OCI-LY7 (cell line): ENCODE measurements at regions of chr4 and their contacts with region 1.

Region 1: GRCh38 chr4:151614561-151614960 is 146.2 kb downstream of the GATB start:
- DNase-seq: no peak
- H3K4me3 ChIP-seq: no peak overlapping the region
- H3K27ac ChIP-seq: no peak overlapping the region
- H3K4me1 ChIP-seq: no peaks in the 10 kb centered on the region
- CTCF ChIP-seq: no peak

Region 2: GRCh38 chr4:151117371-151117962 is 497.1 kb before region 1 on chr4:
- CTCF ChIA-PET with region 1: no interaction called
- POLR2A ChIA-PET with region 1: no interaction called
- intact Hi-C with region 1: loop called (anchors 5 kb)
- DNase-seq: peak; percentile 71
- H3K4me3 ChIP-seq: no peak overlapping the region
- H3K27ac ChIP-seq: no peak overlapping the region
- H3K4me1 ChIP-seq: peaks cover 5% of the 10 kb centered on the region
- CTCF ChIP-seq: peak; percentile 87

Region 3: DNA sequence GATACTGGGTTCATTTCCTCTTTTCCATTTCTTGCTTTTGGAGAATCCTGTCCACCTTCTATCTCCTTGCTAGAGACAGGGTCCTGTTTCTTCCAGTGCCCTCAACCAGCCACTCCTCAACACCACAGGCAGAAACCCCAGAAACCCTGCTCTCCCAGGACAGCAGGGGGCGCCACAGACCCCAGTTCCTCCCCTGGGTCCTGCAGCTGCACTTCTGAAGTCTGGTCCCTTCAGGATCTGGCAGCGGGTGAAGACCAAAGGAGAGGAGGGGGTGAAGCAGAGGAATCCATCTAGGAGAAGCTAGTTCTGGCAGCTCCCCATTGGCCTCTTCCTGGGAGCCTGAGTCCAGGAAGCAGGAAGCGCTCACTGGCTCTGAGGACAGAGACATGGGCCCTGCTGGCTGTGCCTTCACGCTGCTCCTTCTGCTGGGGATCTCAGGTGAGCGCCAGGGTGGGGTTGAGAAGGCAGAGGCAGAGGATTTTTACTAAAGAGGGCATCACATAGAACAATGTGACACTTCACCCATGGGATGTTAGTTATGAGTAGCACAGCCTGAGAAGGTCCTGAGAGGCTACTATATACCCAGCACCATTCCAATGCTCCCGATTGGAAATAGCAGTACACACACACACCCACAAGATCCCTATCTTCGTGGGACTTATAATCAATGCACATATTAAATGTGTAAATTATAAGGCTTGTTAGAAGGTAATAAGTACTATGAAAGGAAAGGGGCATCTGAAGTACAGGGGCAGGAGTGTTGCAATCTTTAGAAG is 337.6 kb before region 1 on chr4 and contains the start of gene PRSS48:
- CTCF ChIA-PET with region 1: no interaction called
- POLR2A ChIA-PET with region 1: no interaction called
- intact Hi-C with region 1: loop called (anchors 5 kb)
- DNase-seq: peak; percentile 48
- H3K4me3 ChIP-seq: no peak within 1 kb of the TSS
- H3K27ac ChIP-seq: no peak within 1 kb of the TSS
- H3K4me1 ChIP-seq: no peaks in the 10 kb centered on the region
- CTCF ChIP-seq: peak; percentile 84
- total RNA-seq, gene PRSS48: not detected in 2 replicates

Region 4: DNA sequence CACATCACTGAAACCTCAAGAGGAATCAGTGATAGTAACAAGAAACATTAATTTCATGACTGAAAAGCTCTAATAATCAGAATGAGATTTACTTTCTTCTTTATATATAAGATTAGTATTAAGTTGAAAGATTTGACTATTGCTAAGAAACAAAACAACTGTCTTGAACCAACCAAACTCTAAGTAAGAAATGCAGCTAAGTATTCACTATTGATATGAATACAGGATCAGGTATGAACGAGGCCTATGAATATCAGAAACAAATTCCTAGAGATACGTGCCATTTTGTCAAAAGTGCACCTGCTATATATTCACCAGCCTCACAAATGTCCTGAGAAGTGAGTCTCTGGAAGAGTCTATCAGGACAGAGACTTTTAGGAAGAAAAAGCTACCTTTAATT is 114.1 kb after region 1 on chr4:
- CTCF ChIA-PET with region 1: no interaction called
- POLR2A ChIA-PET with region 1: no interaction called
- intact Hi-C with region 1: no loop called
- DNase-seq: no peak
- H3K4me3 ChIP-seq: no peak overlapping the region
- H3K27ac ChIP-seq: no peak overlapping the region
- H3K4me1 ChIP-seq: no peaks in the 10 kb centered on the region
- CTCF ChIP-seq: no peak

Region 5: DNA sequence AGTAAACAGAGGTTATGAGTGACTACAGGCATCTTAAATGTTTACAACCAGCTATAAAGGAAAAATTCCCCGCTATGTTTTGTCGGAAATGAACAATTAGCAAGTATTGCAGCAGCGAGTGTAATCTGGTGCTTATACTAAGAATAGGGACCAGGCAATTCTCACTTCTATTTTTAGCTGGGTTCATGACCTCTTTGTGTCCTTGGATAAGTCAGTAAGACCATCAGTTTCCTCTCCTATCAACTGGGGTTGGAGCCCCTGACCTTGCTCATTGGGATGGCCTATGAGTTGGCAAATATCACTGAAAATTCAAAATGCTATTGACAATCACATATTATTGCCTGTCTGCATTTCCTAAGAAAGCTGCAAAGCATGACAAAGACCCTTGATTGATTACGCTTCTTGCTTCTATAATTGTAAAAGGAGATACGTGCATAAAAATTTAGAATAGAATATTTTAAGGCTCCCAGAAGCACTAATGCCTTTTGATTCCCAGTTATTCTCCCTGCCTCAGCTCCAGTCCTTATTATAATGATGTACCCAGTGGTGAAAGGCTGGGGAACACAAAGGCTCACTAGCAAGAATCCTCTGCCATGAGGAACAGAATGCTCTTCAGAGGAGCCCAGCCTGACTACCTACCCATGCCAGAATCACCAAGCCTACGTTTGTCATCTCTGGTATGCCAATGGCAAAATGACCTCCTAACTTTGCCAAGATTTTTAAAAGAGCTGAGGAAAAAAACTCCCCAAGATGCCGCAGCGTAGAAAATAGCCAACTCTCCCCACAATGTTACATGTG is 124.4 kb after region 1 on chr4:
- CTCF ChIA-PET with region 1: no interaction called
- POLR2A ChIA-PET with region 1: no interaction called
- intact Hi-C with region 1: no loop called
- DNase-seq: no peak
- H3K4me3 ChIP-seq: no peak overlapping the region
- H3K27ac ChIP-seq: no peak overlapping the region
- H3K4me1 ChIP-seq: no peaks in the 10 kb centered on the region
- CTCF ChIP-seq: no peak

Region 6: GRCh38 chr4:151824656-151825055 is 210.1 kb after region 1 on chr4:
- CTCF ChIA-PET with region 1: no interaction called
- POLR2A ChIA-PET with region 1: no interaction called
- intact Hi-C with region 1: no loop called
- DNase-seq: no peak
- H3K4me3 ChIP-seq: no peak overlapping the region
- H3K27ac ChIP-seq: no peak overlapping the region
- H3K4me1 ChIP-seq: no peaks in the 10 kb centered on the region
- CTCF ChIP-seq: no peak